Sciatic nerve (tissue), 2 donors: ENCODE measurements at regions of chr6 and their contacts with region 1.

Region 1: DNA sequence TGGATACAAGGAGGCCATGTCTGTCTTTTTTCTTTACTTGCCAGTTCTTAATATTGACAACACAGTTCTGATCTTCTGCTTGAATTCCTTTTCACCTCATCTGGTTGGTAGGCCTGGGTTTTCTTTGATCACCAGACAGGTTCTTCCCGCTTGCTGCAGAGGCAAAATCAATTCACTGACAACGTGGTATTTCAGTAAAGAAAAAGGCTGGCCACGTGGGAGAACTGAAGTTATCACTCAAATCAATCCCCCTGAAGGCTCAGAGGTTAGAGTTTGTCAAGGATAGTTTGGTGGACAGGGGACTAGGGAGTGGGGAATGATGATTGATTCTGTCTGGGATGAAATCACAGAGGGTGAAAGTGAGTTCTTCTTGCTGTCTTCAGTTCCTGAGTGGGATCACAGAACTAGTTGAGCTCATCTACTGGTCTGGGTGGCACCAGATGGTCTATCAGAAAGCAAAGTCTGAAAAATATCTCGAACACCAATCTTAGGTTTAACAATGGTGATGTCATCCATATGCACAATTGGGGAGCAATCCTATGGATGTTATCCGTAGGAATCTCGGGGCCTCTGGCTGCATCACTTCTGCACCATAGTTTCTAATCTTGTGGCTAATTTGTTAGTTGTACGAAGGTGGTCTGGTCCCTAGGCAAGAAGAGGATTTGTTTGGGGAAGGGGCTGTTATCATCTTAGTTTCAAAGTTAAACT is 37.3 kb upstream of the OLIG3 start:
- DNase-seq: no peak
- ATAC-seq: no peak

Region 2: GRCh38 chr6:137497721-137498463 is 33.6 kb before region 1 on chr6:
- intact Hi-C with region 1: loop called (anchors 1 kb)
- DNase-seq: no peak
- ATAC-seq: no peak